Transverse colon (tissue), 4 donors: ENCODE measurements at regions of chr2 and their contacts with region 1.

Region 1: DNA sequence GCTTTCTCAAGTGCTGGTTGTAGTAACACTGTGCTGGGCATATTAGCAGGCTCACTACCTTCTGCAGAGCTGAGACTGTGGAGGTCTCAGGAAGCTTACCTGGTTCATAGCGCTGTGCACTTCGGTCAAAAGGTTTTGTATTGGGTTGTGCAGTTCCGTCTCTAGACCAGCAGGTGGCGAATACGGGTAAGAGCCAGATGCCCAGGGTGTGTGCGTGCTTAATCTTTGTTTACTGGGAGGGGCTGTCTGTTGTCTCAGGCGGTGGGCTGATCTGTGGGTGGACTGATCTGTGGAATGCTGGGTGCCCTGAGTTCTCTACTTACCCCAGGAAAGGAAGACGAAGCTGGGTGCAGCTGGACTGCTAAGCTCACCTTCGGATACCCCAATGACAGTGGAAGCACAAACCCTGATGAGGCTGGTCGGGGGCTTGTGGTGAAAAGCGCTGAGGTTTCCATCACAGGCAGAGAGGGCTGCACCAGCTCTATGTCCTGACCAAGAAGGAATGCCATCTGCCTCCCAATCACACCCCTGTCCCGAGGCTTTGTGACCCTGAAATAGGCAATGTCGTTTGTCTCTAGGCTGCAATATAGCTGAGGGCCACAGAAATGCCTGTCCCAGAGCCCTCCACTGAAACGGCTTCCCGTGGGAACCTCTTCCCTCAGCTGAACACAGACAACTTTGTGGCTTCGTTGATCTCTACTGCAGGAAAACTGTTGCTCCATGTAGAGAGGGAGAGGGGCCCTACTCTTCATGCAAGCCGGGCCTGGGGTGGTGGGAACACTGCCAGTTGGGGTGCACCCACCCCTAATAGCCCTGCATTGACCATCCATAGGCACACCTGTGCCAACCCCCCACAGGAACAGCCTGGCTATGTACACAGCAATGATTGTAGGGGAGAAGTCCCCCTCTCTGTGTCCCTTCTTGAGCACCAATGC is 45.9 kb upstream of the FAM117B start:
- DNase-seq: peak; percentile 71
- H3K4me3 ChIP-seq: peak overlapping the region in 1 of 4 donors; percentile 16
- H3K27ac ChIP-seq: peak overlapping the region in 2 of 4 donors; percentile 15 to 31
- H3K4me1 ChIP-seq: peaks cover 3 to 14% (median 9%) of the 10 kb centered on the region in 4 donors
- H3K27me3 ChIP-seq: no peaks in the 10 kb centered on the region
- CTCF ChIP-seq: peak; percentile 91 to 98 (median 95)
- EP300 ChIP-seq: no peak
- POLR2A ChIP-seq: no peak

Region 2: DNA sequence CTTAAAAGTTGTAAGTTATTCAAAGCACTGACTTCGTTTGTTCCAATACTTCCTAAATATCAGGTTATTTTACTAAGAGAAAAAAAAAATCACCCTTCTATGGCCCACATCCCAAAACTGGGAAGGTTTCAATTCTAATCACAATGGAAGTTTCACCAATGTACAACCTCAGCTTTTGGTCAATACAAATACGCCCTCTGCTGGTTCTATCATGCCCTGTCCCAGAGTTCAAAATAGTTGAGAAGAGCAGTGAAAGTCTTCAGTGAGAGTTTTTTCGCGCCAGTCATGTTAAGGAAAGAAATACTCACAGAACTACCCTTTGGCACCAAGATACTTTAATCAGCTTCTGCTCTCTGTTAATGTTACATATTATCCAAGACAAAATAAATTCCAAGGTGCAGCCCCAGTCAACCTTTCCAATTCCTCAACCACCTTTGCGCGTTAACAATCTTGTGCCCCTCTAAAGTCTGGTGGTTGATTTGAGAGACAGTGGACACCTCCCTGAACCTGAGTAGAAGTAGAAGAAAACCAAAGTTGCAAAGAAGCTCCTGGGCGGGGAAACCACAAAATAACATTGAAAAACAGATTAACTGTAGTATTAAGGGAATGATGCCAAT is 410.5 kb before region 1 on chr2:
- in situ Hi-C with region 1: no loop called
- intact Hi-C with region 1: no loop called
- DNase-seq: peak; percentile 47
- H3K4me3 ChIP-seq: no peak overlapping the region
- H3K27ac ChIP-seq: no peak overlapping the region
- H3K4me1 ChIP-seq: no peaks in the 10 kb centered on the region
- H3K27me3 ChIP-seq: no peaks in the 10 kb centered on the region
- CTCF ChIP-seq: peak; percentile 77 to 87 (median 84)
- EP300 ChIP-seq: no peak
- POLR2A ChIP-seq: no peak

Region 3: GRCh38 chr2:202771741-202772460 is 183.0 kb after region 1 on chr2:
- in situ Hi-C with region 1: loop called in 1 of 4 experiments (anchors 25 kb)
- intact Hi-C with region 1: no loop called
- DNase-seq: no peak
- H3K4me3 ChIP-seq: no peak overlapping the region
- H3K27ac ChIP-seq: no peak overlapping the region
- H3K4me1 ChIP-seq: peaks cover 0 to 5% (median 0%) of the 10 kb centered on the region in 4 donors
- H3K27me3 ChIP-seq: no peaks in the 10 kb centered on the region
- CTCF ChIP-seq: no peak
- EP300 ChIP-seq: no peak
- POLR2A ChIP-seq: no peak

Region 4: DNA sequence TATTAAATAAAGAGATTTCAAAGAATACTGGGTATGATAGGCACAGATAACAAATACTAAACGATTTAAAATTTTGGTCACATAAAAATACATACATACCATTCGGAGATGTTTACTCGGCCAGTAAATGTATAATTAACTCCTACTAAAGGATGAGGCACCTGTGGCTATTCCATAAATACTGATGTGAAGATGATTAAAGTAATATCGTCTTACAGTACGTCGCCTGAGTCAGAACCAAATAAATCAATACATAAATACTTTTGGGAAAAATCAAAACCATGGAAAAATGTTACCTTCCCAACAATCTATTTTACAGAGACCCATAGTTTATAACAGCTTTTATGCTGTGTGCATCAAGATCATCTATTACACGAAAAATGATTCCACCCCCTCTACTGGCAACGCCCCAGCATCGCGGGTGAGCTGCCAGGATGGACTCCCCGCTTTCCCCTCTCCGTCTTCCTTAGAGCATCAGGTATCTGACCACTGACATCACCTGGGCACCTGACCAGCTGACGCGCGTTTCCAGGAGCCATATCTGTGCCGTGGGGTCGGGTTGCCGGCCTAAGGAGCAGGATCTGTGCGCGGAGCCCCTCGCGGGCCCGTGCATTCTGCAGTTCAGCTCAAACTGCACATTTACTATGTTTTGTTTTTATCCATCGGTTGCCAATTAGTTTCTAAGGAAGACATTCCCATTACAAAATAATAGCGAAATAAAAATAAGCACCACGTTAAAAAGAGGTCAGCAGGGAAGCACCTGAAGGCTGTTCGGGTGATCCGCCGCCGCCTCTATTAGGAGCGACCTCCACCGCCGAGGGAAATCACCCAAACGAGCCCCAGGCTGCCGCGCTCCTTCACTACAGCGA is 281.8 kb after region 1 on chr2:
- in situ Hi-C with region 1: loop called (anchors 25 kb)
- intact Hi-C with region 1: no loop called
- DNase-seq: peak; percentile 57
- H3K4me3 ChIP-seq: peak overlapping the region; percentile 52 to 85 (median 74)
- H3K27ac ChIP-seq: peak overlapping the region; percentile 75 to 82 (median 80)
- H3K4me1 ChIP-seq: peaks cover 0 to 13% (median 6%) of the 10 kb centered on the region in 4 donors
- H3K27me3 ChIP-seq: no peaks in the 10 kb centered on the region
- CTCF ChIP-seq: peak; percentile 30 to 36 (median 34)
- EP300 ChIP-seq: no peak
- POLR2A ChIP-seq: no peak

Region 5: GRCh38 chr2:202883987-202884675 is 295.2 kb after region 1 on chr2:
- in situ Hi-C with region 1: loop called in 2 of 4 experiments (anchors 25 kb)
- intact Hi-C with region 1: no loop called
- DNase-seq: no peak
- H3K4me3 ChIP-seq: no peak overlapping the region
- H3K27ac ChIP-seq: no peak overlapping the region
- H3K4me1 ChIP-seq: no peaks in the 10 kb centered on the region
- H3K27me3 ChIP-seq: no peaks in the 10 kb centered on the region
- CTCF ChIP-seq: no peak
- EP300 ChIP-seq: no peak
- POLR2A ChIP-seq: no peak